ENCODE measurements at regions of chr7 and their contacts with region 1.

Region 1: GRCh38 chr7:138008547-138009349 is 6.9 kb upstream of the CREB3L2 start:
- DNase-seq: no peak

Region 2: DNA sequence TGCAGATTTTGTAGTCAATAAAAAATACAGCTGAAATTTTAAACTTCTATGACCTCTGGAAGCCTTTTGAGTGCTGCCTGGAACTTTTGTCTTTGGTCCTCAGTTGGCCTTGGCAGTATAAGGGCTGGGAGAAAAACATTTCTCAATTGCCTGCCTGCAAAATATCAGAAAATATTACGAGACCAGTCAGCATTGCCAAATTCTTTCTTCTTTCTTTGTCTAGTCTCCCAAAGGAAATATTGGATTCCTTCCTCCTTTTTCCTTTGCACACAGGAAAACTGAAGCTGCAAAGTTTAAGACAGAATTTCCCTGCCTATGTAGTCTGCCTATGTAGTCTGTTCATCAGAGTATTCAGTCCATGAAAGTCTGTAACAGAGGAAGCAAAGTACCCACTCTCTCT is 1044.4 kb before region 1 on chr7:
- intact Hi-C with region 1: no loop called
- DNase-seq: no peak

Region 3: DNA sequence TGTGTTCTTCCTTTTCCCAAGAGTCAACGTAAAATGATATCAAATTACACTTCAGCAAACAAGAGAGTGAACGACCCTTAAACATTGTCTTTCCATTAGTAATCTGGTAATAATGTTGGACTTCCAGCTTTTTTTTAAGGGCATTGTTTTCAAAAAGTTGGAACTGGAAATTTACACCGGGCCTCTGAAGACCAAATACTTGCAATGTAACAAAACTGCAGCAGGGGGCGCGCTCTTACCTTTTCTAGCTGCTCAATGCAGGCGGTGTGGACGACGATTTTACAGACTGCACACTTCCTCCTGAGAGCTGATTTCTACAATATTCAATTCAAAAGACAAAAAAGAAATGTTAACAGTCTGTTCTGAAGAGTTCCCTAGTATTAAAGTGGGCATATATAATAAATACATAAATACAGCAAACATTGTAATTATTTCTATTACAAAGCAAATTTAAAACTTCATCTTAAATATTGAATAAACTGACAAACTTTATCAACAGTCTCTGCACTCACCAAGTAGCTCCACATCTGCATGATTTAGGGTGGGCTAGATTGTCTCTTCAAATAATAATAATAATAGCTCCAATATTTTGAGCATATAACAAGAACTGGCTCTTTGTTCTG is 352.4 kb before region 1 on chr7:
- intact Hi-C with region 1: loop called in 1 of 2 experiments (anchors 5 kb)
- DNase-seq: peak; percentile 94

Region 4: GRCh38 chr7:137909037-137909436 is 99.7 kb before region 1 on chr7:
- intact Hi-C with region 1: loop called in 1 of 2 experiments (anchors 5 kb)
- DNase-seq: peak; percentile 86

Measured in posterior vena cava (tissue), 2 donors.